Upper lobe of right lung (tissue), 1 donor: ENCODE measurements at regions of chr12 and their contacts with region 1.

Region 1: DNA sequence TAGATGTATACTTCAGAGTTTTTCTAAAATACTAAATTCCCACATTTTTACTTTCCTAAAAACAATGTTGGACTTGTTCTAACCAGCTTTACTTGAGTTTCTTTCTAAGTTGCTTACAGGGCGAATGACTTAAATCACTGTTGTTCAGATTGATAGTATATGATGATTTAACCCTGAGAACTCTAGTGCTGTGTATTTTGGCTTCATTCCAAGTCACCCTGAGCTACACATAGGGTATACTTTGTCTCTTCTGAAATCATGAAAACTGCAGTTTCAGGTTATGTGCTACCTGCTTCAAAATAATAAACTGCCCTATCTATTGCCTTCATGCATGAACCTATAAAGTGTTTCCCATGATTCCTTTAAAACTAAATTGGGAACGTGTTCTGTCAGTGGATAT is 162.5 kb upstream of the PDE3A start:
- DNase-seq: no peak
- ATAC-seq: no peak
- H3K4me3 ChIP-seq: no peak overlapping the region
- H3K27ac ChIP-seq: no peak overlapping the region
- H3K4me1 ChIP-seq: no peaks in the 10 kb centered on the region
- H3K27me3 ChIP-seq: no peaks in the 10 kb centered on the region
- CTCF ChIP-seq: no peak

Region 2: GRCh38 chr12:20101046-20101445 is 104.8 kb before region 1 on chr12:
- intact Hi-C with region 1: loop called (anchors 10 kb)
- DNase-seq: no peak
- ATAC-seq: peak; percentile 33
- H3K4me3 ChIP-seq: no peak overlapping the region
- H3K27ac ChIP-seq: no peak overlapping the region
- H3K4me1 ChIP-seq: no peaks in the 10 kb centered on the region
- H3K27me3 ChIP-seq: no peaks in the 10 kb centered on the region
- CTCF ChIP-seq: no peak

Region 3: DNA sequence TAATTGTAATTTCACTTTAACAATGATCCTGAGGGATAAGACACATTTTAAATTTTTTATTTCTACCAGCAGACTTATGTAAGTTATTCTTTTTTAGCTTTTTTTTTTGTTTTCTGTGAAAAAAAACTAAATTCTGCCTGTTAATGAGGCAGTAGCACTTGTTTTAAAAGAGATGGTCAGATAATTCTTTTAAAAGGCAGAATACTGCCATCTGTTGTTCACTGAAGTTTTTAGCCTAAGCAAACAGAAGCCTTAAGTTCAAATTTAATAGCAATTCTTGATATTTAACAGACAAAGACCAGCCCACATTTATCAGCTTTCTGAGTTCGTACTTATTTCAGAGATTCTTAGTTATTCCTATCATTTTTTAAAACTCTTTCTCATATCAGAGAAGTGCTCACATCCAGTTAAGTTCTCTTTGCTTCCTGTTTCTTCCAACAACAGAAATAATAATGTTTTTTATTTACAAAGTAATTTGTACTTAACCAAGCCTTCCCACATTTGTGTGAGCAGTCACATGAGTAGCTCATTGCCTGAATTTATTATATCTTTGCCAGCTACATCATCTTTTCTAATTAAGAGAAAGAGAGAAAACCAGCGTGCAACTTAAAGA is 395.9 kb after region 1 on chr12:
- intact Hi-C with region 1: no loop called
- DNase-seq: no peak
- ATAC-seq: no peak
- H3K4me3 ChIP-seq: no peak overlapping the region
- H3K27ac ChIP-seq: no peak overlapping the region
- H3K4me1 ChIP-seq: no peaks in the 10 kb centered on the region
- H3K27me3 ChIP-seq: no peaks in the 10 kb centered on the region
- CTCF ChIP-seq: peak; percentile 48